Tibial artery (tissue), 4 donors: ENCODE measurements at regions of chr3 and their contacts with region 1.

Region 1: DNA sequence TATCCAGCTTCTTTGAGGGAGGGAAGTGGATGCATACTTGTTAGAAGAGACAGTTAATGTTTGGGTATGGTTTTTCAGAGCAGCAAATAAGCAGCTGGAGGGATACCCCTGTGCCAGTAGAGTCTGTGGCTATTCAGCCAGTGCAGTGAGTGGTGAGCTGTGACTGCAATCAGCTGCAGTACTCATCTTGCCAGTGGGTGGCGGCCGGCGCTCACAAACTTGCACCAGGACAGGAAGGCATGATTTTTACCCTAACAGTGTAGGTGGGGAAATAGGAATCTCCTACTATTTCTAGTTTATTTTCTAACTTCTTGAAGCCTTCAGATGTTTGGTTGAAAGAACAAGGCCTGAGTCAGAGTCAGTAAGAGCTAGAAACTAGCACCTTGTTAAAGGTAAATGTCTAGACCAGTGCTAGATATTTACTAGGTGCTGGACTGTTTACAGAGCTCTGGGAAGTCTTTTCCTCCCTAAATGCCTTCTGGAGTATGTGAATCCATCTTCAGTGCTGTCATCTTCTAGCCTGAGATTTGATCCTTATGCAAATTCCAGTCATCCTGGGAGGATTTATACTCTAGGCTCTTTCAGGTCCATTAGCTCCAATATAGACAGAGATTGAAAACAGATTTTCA is 23.6 kb downstream of the TIMP4 start:
- DNase-seq: peak; percentile 76 to 82
- H3K4me3 ChIP-seq: no peak overlapping the region
- H3K27ac ChIP-seq: no peak overlapping the region
- H3K4me1 ChIP-seq: peaks cover 0 to 19% (median 2%) of the 10 kb centered on the region in 4 donors
- H3K27me3 ChIP-seq: peaks cover 0 to 4% of the 10 kb centered on the region in 2 donors
- CTCF ChIP-seq: peak; percentile 86 to 92

Region 2: GRCh38 chr3:12175844-12176453 is 40.8 kb after region 1 on chr3:
- intact Hi-C with region 1: loop called (anchors 1 kb)
- DNase-seq: peak; percentile 71 to 82
- H3K4me3 ChIP-seq: no peak overlapping the region
- H3K27ac ChIP-seq: peak overlapping the region; percentile 25 to 34
- H3K4me1 ChIP-seq: peaks cover 0 to 63% (median 22%) of the 10 kb centered on the region in 4 donors
- H3K27me3 ChIP-seq: no peaks in the 10 kb centered on the region
- CTCF ChIP-seq: peak; percentile 88 to 91

Region 3: GRCh38 chr3:12253561-12254343 is 118.6 kb after region 1 on chr3:
- intact Hi-C with region 1: no loop called
- DNase-seq: no peak
- H3K4me3 ChIP-seq: no peak overlapping the region
- H3K27ac ChIP-seq: no peak overlapping the region
- H3K4me1 ChIP-seq: no peaks in the 10 kb centered on the region
- H3K27me3 ChIP-seq: no peaks in the 10 kb centered on the region
- CTCF ChIP-seq: no peak

Region 4: DNA sequence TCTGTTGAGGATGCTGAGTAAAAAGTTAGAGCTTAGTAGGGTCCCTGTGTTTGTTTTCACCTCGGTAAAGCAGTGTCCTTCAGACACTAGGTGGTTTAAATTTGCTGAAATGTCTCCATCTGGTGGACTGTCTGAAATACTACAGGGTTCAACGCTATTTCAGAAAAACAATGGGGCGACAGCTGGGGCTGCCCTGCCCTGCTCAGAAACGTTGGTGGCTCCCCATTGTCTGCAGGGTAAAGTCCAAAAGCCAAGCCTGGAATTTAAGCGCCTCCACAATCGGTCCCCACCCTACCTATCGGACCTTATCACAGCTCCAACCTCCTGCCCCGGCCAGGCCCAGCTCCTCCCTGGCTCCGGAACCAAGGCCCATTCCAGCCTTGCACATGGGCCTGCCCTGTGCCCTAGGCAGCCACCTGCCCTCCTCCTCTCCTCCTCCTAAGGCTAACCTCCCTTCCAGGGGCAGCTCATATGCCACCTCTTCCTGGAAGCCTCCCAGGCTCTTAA is 344.8 kb after region 1 on chr3:
- intact Hi-C with region 1: loop called (anchors 2 kb)
- DNase-seq: no peak
- H3K4me3 ChIP-seq: no peak overlapping the region
- H3K27ac ChIP-seq: no peak overlapping the region
- H3K4me1 ChIP-seq: peaks cover 0 to 30% (median 16%) of the 10 kb centered on the region in 4 donors
- H3K27me3 ChIP-seq: no peaks in the 10 kb centered on the region
- CTCF ChIP-seq: peak; percentile 72 to 84

Region 5: GRCh38 chr3:12719984-12720898 is 585.1 kb after region 1 on chr3:
- intact Hi-C with region 1: loop called (anchors 10 kb)
- DNase-seq: peak; percentile 77 to 82
- H3K4me3 ChIP-seq: peak overlapping the region; percentile 34 to 47
- H3K27ac ChIP-seq: peak overlapping the region in 1 of 2 donors; percentile 18
- H3K4me1 ChIP-seq: peaks cover 0 to 10% (median 4%) of the 10 kb centered on the region in 4 donors
- H3K27me3 ChIP-seq: no peaks in the 10 kb centered on the region
- CTCF ChIP-seq: peak; percentile 91 to 93